Panc1 (cell line): ENCODE measurements at regions of chr2 and their contacts with region 1.

Region 1: DNA sequence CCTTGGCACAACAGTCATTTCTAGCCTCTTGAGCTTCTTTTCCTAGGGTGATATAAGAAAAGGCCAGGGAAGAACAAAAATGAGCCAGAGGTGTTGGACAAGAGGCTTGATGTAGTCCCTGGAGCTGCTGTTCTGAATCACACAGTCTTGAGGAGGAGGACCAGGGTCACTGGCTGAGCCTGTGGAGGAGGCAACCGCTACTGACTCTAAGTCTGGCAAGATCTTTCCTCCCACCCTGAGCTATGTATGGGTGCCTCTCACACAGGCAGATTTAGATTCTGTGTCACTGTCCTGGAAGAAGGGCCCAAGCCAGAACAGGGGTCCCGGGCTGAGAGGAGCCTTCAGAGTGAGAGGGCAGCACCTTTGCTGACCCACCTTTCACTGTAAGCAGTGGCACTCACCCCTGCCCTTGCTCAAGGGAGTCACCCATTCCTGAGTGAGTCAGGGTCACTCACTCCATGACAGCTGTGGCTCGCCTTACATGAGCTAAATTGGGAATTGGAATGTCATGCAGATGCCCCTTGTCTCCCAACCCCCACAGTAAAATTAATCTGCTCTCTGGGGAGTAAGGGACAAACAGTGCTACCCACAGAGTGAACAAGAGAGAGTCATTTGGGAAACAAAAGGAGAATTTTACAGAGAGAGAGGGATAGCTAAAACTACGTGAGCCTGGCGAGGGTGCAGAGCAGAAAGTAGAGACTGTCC is at the start of gene TRIM54:
- DNase-seq: no peak
- ATAC-seq: peak; percentile 49; the same call in 1 of the 2 replicates
- H3K4me3 ChIP-seq: no peak within 1 kb of the TSS
- H3K27ac ChIP-seq: no peak within 1 kb of the TSS
- H3K4me1 ChIP-seq: peaks cover 16% of the 10 kb centered on the region
- H3K27me3 ChIP-seq: no peaks in the 10 kb centered on the region
- CTCF ChIP-seq: no peak
- total RNA-seq, gene TRIM54: 0.21 TPM

Region 2: GRCh38 chr2:25982273-25982967 is 1299.6 kb before region 1 on chr2 and contains the start of gene KIF3C:
- CTCF ChIA-PET with region 1: no interaction called
- POLR2A ChIA-PET with region 1: no interaction called
- in situ Hi-C with region 1: no loop called
- intact Hi-C with region 1: no loop called
- DNase-seq: no peak
- ATAC-seq: peak; percentile 83
- H3K4me3 ChIP-seq: peak within 1 kb of the TSS; percentile 69 to 74
- H3K27ac ChIP-seq: peak within 1 kb of the TSS; percentile 82
- H3K4me1 ChIP-seq: peaks cover 41% of the 10 kb centered on the region
- H3K27me3 ChIP-seq: no peaks in the 10 kb centered on the region
- CTCF ChIP-seq: no peak
- total RNA-seq, gene KIF3C: 55.7 TPM

Region 3: DNA sequence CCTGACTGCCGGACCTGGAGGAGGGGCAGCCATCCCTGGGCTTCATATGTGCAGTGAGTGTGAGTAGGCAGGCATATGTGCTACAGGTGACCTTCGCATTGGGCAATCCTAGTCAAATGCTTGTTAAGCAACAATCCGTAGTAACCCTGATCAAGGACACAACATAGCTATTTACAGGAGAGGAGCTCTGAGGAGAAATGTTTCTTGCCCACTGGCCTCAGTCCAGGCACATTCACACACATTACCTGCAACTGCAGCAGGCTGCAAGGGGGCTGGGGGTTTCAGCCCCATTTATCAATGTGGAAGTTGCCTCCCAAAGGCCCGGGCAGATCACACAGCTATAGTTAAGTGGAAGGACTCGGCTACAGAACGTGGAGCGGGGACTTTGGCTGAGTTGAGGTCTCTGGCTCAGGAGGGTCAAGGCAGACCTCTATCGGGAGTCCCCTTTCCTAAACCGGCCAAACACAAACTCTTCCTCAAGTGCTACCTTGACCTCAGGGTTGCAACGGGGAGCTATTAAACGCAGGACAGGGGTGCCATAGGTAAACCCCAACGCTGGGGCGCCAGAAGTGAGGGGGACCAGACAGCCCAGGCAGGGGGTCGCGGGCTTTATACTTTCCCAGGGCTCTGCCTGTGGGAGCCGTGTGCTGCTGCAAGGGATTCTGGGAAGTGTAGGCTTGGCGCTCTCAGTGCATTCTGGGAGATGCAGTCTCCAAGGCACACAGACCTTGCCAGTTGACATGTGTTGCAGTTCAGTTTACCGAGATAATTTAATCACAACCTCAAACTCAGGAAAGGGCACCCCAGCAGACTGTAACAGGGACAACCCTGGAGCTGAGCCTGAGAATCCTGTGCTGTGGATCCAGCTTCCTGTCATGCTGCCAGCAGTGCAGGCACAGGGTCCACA is 186.0 kb before region 1 on chr2:
- CTCF ChIA-PET with region 1: no interaction called
- POLR2A ChIA-PET with region 1: interaction called, 3 read pairs
- in situ Hi-C with region 1: no loop called
- intact Hi-C with region 1: loop called (anchors 5 kb)
- DNase-seq: no peak
- ATAC-seq: peak; percentile 76
- H3K4me3 ChIP-seq: peak overlapping the region in 1 of 2 experiments; percentile 36; a peak in 2 of 4 replicates
- H3K27ac ChIP-seq: no peak overlapping the region
- H3K4me1 ChIP-seq: no peaks in the 10 kb centered on the region
- H3K27me3 ChIP-seq: no peaks in the 10 kb centered on the region
- CTCF ChIP-seq: no peak

Region 4: DNA sequence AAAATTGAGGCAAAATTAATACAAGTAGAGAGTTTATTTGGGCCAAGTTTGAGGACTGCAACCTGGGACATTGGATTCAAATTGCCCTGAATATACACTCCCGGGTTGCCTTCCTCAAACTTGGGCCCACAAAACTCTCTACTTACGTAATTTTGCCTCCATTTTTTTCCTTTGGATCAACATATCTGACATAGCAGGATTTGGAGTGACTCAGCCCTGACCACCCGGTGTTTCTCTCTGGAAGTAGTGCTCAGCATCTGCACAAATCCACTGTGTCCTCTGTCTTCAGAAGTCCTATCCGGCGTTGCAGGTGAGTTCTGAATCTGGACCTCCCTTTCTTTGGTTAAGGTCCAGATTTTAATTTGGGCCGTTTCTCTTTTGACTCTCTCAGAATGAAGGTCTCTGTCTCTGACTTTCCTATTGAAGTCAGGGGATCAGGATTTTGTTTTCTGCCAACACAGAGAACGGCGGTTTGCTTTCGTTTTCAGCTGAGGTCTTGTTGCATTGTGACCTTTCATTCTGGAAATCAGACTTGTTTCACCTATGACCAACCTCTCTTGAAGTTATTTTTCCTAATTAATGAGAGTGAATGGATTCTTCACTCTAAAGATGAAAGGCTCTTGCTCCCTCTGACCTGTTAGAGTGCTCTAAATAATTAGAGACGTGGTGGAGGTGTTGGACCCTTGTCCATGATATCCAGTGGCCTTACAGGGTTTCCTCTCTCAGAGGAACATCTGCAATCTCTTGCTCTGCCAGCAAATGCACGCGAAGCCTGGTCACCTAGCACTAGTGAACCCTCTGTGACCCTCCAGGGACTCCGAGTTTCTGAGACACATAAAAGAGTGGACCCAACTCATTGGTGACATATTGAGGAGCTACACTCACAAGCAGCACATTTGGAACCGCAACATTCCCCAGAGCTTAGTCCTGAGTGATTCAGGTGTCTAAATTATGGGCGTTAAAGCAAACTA is 119.6 kb before region 1 on chr2:
- CTCF ChIA-PET with region 1: interaction called, 10 read pairs
- POLR2A ChIA-PET with region 1: no interaction called
- in situ Hi-C with region 1: no loop called
- intact Hi-C with region 1: no loop called
- DNase-seq: no peak
- ATAC-seq: no peak
- H3K4me3 ChIP-seq: peak overlapping the region; percentile 21 to 43; a peak in 3 of 4 replicates
- H3K27ac ChIP-seq: peak overlapping the region; percentile 61
- H3K4me1 ChIP-seq: no peaks in the 10 kb centered on the region
- H3K27me3 ChIP-seq: no peaks in the 10 kb centered on the region
- CTCF ChIP-seq: no peak

Region 5: DNA sequence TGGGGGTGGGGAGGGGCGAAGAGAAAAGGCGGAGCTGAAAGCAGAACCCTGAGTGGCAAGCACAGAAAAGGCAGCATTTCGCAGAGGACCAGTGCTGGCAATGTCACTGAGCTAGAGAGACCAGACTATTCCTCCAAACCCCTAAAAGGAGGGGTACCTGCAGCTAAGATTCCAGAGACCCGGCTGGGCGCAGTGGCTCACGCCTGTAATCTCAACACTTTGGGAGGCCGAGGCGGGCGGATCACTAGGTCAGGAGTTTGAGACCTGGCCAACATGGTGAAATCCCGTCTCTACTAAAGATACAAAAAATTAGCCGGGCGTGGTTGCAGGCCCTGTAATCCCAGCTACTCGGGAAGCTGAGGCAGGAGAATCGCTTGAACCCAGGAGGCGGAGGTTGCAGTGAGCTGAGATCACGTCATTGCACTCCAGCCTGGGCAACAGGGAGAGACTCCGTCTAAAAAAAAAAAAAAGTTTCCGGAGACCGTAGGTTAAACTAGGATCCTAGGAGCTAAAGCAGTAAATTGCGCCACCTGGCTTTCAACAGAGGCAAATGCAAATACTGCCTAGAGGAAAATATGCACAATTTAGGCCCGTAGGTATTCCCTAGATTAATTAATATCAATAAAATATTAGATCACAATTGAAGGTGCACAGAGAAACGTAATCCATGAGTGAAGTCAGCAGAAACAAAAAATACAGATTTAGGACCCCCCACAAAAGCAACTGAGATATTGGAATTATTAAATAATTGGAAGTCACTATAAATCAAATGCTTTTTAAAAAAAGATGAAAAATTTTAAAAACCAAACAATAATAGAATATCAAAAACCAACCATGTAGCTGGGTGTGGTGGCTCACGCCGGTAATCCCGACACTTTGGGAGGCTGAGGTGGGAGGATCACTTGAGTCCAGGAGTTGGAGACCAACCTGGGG is 21.4 kb after region 1 on chr2:
- CTCF ChIA-PET with region 1: interaction called, 11 read pairs
- POLR2A ChIA-PET with region 1: no interaction called
- in situ Hi-C with region 1: no loop called
- intact Hi-C with region 1: no loop called
- DNase-seq: no peak
- ATAC-seq: peak; percentile 76
- H3K4me3 ChIP-seq: peak overlapping the region; percentile 31 to 55
- H3K27ac ChIP-seq: peak overlapping the region; percentile 45; the same call in 1 of the 2 replicates
- H3K4me1 ChIP-seq: no peaks in the 10 kb centered on the region
- H3K27me3 ChIP-seq: no peaks in the 10 kb centered on the region
- CTCF ChIP-seq: peak; percentile 93

Region 6: DNA sequence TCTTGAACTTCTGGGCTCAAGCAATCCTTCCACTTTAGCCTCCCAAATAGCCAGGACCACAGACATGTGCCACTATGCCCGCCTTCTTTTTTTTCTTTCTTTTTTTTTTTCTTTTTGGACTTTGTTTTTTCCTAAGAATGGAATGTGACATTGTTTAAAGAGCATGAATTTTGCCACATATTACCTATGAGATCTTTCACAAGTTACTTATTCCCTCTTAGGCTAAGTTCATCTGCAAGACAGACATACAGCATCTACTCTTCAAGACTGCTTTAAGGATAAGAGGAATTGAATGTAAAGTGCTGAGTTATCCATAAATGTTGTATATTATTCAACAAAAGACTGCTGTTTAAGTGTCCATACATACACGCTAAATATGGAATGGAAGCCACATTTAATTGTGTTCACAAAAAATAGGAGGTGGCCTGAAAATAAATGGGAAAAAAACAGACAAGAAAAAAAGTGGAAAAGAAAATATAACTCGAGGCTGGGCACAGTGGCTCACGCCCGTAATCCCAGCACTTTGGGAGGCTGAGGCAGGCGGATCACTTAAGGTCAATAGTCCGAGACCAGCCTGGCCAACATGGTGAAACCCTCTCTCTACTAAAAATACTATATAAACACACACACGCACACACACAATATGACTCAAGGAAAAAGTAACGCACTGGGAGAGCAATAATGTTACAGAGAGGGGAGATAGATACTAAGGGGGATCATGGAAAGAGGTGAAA is 130.6 kb after region 1 on chr2:
- CTCF ChIA-PET with region 1: no interaction called
- POLR2A ChIA-PET with region 1: no interaction called
- in situ Hi-C with region 1: no loop called
- intact Hi-C with region 1: no loop called
- DNase-seq: no peak
- ATAC-seq: no peak
- H3K4me3 ChIP-seq: no peak overlapping the region
- H3K27ac ChIP-seq: no peak overlapping the region
- H3K4me1 ChIP-seq: peaks cover 10% of the 10 kb centered on the region
- H3K27me3 ChIP-seq: no peaks in the 10 kb centered on the region
- CTCF ChIP-seq: no peak